CD8-positive, alpha-beta T cell (primary cell): ENCODE measurements at regions of chr6 and their contacts with region 1.

Region 1: DNA sequence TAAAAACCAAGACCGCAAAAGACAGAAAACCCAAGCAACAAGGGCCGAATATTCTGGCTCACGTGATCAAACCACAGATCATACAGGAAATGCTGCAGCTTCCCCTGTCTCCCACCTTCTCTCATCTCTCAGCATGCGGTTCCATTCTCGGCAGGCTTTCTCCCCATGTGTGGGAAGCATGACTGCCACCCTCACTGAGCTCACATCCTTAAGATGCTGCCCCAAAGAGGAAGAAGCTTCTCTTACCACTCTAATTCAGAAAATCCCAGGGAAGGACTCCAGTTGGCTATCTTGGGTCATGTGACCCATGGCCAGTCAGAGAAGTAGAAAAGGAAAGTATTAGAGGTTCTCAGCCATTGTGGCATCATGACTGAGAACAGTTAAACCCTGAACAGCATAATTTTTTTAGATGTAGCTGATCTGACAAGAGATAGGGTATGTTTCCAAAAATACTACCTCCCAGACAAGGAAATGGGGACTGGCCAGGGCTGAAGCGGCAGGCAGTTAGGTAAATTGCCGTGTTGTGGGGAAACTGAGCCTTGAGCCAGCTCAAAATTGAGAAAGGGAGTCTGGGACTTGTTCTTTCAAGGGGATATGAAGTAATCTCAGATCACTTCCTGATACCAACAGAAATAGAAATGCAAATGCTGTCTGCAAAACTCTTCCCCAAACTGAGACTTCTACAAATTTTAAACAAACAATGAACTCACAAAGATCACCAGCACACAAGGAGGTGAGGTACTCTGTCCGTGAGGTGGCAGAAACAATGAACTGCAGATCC is 37.1 kb upstream of the GRM4 start:
- DNase-seq: peak; percentile 48 to 95 (median 72)
- ATAC-seq: peak; percentile 92
- H3K4me3 ChIP-seq: peak overlapping the region in 1 of 2 experiments; percentile 18
- H3K4me3 Mint-ChIP-seq: peak overlapping the region; percentile 44
- H3K27ac ChIP-seq: peak overlapping the region in 1 of 2 experiments; percentile 68
- H3K27ac Mint-ChIP-seq: peak overlapping the region; percentile 87
- H3K4me1 ChIP-seq: peaks cover 21% of the 10 kb centered on the region
- H3K4me1 Mint-ChIP-seq: peaks cover 34% of the 10 kb centered on the region
- H3K27me3 ChIP-seq: no peaks in the 10 kb centered on the region
- H3K27me3 Mint-ChIP-seq: no peaks in the 10 kb centered on the region
- CTCF ChIP-seq: no peak

Region 2: DNA sequence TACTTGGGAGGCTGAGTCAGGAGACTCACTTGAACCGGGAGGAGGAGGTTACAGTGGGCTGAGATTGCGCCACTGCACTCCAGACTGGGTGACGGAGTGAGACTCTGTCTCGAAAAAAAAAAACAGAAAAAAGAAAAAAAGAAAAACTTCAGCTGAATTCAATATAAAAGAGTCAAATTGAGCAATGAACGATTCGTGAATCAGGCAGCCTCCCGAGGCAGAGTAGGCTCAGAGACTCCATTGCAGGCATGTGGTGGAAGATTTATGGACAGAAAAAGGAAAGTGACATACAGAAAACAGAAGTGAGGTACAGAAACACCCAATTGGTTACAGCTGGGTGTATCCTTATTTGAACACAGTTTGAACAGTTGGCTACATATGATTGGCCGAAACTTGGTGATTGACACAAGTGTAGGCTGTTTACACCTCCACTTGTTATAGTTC is 1050.8 kb before region 1 on chr6:
- CTCF ChIA-PET with region 1: no interaction called
- POLR2A ChIA-PET with region 1: no interaction called
- intact Hi-C with region 1: no loop called
- DNase-seq: no peak
- ATAC-seq: no peak
- H3K4me3 ChIP-seq: no peak overlapping the region
- H3K4me3 Mint-ChIP-seq: no peak overlapping the region
- H3K27ac ChIP-seq: no peak overlapping the region
- H3K27ac Mint-ChIP-seq: no peak overlapping the region
- H3K4me1 ChIP-seq: no peaks in the 10 kb centered on the region
- H3K4me1 Mint-ChIP-seq: no peaks in the 10 kb centered on the region
- H3K27me3 ChIP-seq: no peaks in the 10 kb centered on the region
- H3K27me3 Mint-ChIP-seq: peaks cover 13% of the 10 kb centered on the region
- CTCF ChIP-seq: no peak

Region 3: GRCh38 chr6:34044945-34045595 is 137.9 kb before region 1 on chr6:
- CTCF ChIA-PET with region 1: no interaction called
- POLR2A ChIA-PET with region 1: no interaction called
- intact Hi-C with region 1: no loop called
- DNase-seq: peak in 8 of 9 experiments; percentile 12 to 71 (median 37)
- ATAC-seq: peak; percentile 89
- H3K4me3 ChIP-seq: no peak overlapping the region
- H3K4me3 Mint-ChIP-seq: no peak overlapping the region
- H3K27ac ChIP-seq: no peak overlapping the region
- H3K27ac Mint-ChIP-seq: peak overlapping the region; percentile 8
- H3K4me1 ChIP-seq: peaks cover 11% of the 10 kb centered on the region
- H3K4me1 Mint-ChIP-seq: peaks cover 16% of the 10 kb centered on the region
- H3K27me3 ChIP-seq: no peaks in the 10 kb centered on the region
- H3K27me3 Mint-ChIP-seq: peaks cover 9% of the 10 kb centered on the region
- CTCF ChIP-seq: no peak

Region 4: GRCh38 chr6:34223956-34224940 is 41.3 kb after region 1 on chr6:
- CTCF ChIA-PET with region 1: no interaction called
- POLR2A ChIA-PET with region 1: interaction called, 4 read pairs
- intact Hi-C with region 1: loop called in 1 of 2 experiments (anchors 2 kb)
- DNase-seq: peak; percentile 88 to 99 (median 94)
- ATAC-seq: peak; percentile 98
- H3K4me3 ChIP-seq: peak overlapping the region; percentile 51 to 86
- H3K4me3 Mint-ChIP-seq: peak overlapping the region; percentile 70
- H3K27ac ChIP-seq: peak overlapping the region; percentile 76 to 87
- H3K27ac Mint-ChIP-seq: peak overlapping the region; percentile 89
- H3K4me1 ChIP-seq: peaks cover 14% of the 10 kb centered on the region
- H3K4me1 Mint-ChIP-seq: peaks cover 20% of the 10 kb centered on the region
- H3K27me3 ChIP-seq: no peaks in the 10 kb centered on the region
- H3K27me3 Mint-ChIP-seq: no peaks in the 10 kb centered on the region
- CTCF ChIP-seq: no peak